ENCODE measurements at regions of chr10 and their contacts with region 1.

Region 1: GRCh38 chr10:124388823-124389612 is 29.7 kb downstream of the OAT start:
- DNase-seq: no peak
- H3K4me3 ChIP-seq: peak overlapping the region; percentile 27 to 51 (median 51)
- H3K27ac ChIP-seq: no peak overlapping the region
- H3K4me1 ChIP-seq: peaks cover 11% of the 10 kb centered on the region
- H3K27me3 ChIP-seq: peaks cover 3% of the 10 kb centered on the region
- CTCF ChIP-seq: peak; percentile 59 to 94 (median 92)

Region 2: GRCh38 chr10:123994417-123995081 is 394.5 kb before region 1 on chr10:
- dilution Hi-C with region 1: loop called (anchors 25 kb)
- DNase-seq: peak; percentile 64
- H3K4me3 ChIP-seq: peak overlapping the region; percentile 26 to 48 (median 47)
- H3K27ac ChIP-seq: peak overlapping the region; percentile 56
- H3K4me1 ChIP-seq: peaks cover 39% of the 10 kb centered on the region
- H3K27me3 ChIP-seq: peaks cover 18% of the 10 kb centered on the region
- CTCF ChIP-seq: peak; percentile 82 to 97 (median 94)

Region 3: GRCh38 chr10:124565565-124566256 is 176.7 kb after region 1 on chr10:
- dilution Hi-C with region 1: no loop called
- DNase-seq: no peak
- H3K4me3 ChIP-seq: no peak overlapping the region
- H3K27ac ChIP-seq: no peak overlapping the region
- H3K4me1 ChIP-seq: peaks cover 3% of the 10 kb centered on the region
- H3K27me3 ChIP-seq: no peaks in the 10 kb centered on the region
- CTCF ChIP-seq: peak in 2 of 3 experiments; percentile 27 to 44

Measured in keratinocyte (primary cell).